Posterior vena cava (tissue), 2 donors: ENCODE measurements at regions of chr22 and their contacts with region 1.

Region 1: DNA sequence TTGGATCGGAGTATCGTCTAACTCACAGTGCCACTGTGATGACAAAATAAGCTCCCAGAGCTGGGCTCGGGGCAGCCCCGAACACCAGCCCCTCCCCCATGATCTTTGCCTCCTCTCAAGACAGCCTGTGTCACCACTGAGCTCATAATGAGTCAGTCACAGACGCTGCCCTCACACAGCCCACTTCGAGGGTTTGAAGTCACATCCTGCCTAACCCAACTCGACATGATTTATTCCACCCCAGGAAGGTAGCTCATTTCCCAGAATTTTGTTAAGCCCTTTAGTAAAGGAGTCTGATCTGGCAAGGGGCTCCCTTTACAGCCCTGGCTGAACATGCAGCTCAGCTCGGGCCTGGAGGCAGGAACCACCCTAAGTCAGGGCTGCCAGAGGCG is 22.8 kb downstream of the MYH9 start:
- DNase-seq: peak; percentile 93

Region 2: GRCh38 chr22:36311386-36312358 is 53.3 kb before region 1 on chr22:
- intact Hi-C with region 1: loop called in 1 of 2 experiments (anchors 10 kb)
- DNase-seq: no peak

Region 3: DNA sequence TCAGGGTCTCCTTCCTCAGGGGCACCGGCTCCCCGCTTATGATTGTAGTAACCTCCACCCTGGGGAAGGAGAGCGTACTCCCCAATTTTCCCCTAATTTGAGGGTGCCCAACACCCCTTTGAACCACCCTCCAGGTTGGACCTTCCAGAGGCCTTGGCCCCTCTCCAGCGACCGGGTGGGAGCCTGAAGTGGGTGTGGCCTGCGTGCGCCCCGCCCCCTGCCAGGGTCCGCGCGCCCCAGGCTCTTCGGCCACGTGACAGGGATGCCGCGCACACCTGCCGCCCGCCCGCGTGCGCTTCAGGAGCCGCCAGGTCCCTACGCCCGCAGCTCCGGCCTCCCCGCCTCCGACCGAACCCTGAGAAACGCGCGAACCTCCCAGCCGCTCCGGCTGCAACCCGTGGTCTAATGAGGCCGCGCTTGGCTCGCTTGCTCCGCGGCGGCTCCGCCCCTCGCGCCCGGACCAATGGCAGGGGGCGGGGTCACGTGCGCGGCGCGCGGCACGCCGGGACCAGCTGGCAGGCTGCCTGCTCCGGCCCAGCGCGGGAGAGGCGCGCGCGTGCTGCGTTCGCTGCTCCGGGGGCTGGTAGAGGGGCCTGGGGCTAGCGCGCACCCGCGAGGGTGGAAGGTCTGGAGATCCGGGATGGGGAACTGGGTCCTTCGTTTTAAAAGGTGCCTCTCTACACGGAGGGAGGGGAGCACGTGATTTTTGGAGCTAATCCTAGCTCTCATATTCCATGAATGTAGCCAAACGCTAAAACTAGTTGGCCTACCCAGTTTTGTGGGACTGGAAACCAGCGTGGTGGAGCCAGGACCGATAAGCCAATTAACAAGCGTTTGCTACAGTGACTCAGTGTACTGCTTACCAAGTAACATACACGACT is 141.9 kb after region 1 on chr22 and contains the start of gene FOXRED2:
- intact Hi-C with region 1: no loop called
- DNase-seq: peak; percentile 97
- total RNA-seq, gene FOXRED2: 7.9 to 17.2 TPM

Region 4: GRCh38 chr22:37544955-37545699 is 1180.1 kb after region 1 on chr22:
- intact Hi-C with region 1: no loop called
- DNase-seq: peak; percentile 90